Testis (tissue), 5 donors: ENCODE measurements at regions of chr1 and their contacts with region 1.

Region 1: DNA sequence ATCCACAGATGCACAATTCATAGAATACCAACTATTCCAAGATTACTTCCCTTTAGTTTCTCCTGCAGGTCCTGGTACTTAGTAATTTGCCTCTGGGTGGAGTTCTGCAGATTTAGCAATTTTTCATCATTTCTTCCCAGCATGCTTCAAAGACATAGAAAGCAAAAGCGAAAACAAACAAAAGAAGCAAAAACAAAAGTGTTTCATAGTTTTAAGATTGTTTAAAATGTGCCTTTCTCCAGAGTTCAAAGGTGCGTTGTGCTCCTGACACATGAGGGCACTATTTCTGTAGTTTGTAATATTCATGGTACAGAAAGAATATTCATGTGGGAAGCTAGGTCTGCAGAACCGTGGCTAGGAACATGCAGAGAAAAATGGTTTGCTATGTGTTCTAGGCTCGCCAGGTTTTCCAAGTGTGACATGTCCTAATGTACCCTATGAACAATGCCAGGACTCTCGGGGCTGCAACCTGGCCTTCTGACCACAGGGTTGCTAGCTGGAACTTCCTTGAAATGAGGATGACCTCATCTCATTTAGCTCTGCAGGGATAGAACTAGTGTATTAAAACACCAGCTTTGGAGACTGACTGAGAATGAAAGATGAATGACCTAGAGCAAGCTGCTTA is 30.0 kb upstream of the RCSD1 start:
- DNase-seq: peak; percentile 46
- H3K4me3 ChIP-seq: no peak overlapping the region
- H3K27ac ChIP-seq: no peak overlapping the region
- H3K4me1 ChIP-seq: peaks cover 5% of the 10 kb centered on the region
- H3K27me3 ChIP-seq: no peaks in the 10 kb centered on the region
- CTCF ChIP-seq: peak in 2 of 3 experiments; percentile 39 to 46
- POLR2A ChIP-seq: no peak

Region 2: DNA sequence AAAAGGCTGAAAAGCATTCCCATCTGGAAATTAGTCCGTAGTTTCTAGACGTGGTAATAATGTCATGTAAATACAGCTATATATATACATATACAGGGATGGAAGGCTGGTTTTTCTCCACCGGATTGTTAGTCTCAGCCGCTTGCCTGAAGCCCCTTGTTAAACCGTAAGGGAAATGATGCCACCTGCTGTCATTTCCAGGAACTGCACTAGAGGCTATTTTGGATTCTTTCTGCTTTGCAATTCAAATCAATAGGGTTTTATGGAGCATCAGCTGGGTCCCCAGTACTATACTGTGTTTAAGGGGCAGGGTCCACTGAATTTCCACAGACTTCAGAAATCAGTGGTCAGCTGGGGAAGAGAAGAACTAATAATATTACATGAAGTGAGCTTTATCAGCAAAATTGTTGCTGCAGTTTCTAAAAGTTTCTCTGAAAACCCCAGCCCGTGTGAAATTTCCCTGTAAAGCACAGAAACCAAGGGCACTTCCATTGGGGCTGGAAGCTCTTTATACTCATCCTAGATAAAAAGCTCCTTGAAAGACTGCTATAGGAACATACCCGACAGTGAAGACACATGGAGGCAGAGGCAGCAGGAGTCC is 88.0 kb after region 1 on chr1:
- intact Hi-C with region 1: loop called (anchors 10 kb)
- DNase-seq: peak; percentile 93
- H3K4me3 ChIP-seq: no peak overlapping the region
- H3K27ac ChIP-seq: no peak overlapping the region
- H3K4me1 ChIP-seq: peaks cover 14% of the 10 kb centered on the region
- H3K27me3 ChIP-seq: no peaks in the 10 kb centered on the region
- CTCF ChIP-seq: peak; percentile 91 to 96 (median 92)
- POLR2A ChIP-seq: no peak

Region 3: DNA sequence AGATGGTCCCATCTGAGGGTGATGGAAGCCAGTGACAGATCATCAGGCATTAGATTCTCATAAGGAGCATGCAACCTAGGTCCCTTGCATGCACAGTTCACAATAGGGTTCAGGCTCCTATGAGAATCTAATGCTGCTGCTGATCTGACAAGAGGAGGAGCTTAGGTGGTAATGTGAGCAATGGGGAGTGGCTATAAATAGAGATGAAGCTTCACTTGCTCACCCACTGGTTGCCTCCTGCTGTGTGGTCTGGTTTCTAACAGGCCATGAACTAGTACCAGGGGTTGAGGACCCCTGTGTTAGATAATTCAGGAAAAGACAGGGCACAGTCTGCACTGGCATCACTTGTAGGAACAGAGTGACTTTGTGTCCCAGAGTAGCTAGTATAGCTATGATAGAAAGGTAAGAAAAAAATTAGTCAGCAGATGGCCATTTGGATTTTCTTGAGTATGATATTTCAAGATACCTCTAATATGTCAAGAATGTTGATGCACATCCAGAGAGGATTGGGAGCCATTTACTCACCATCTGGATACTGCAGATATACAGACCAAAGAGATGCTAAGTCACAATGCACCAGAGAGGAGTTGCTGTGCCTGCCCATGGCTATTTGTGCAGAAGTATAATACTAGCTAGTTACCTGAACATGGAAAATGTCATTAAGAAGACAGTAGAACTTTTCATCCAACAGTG is 260.3 kb after region 1 on chr1:
- intact Hi-C with region 1: no loop called
- DNase-seq: no peak
- H3K4me3 ChIP-seq: no peak overlapping the region
- H3K27ac ChIP-seq: no peak overlapping the region
- H3K4me1 ChIP-seq: no peaks in the 10 kb centered on the region
- H3K27me3 ChIP-seq: no peaks in the 10 kb centered on the region
- CTCF ChIP-seq: no peak
- POLR2A ChIP-seq: no peak